Transverse colon (tissue), 4 donors: ENCODE measurements at regions of chr4 and their contacts with region 1.

Region 1: DNA sequence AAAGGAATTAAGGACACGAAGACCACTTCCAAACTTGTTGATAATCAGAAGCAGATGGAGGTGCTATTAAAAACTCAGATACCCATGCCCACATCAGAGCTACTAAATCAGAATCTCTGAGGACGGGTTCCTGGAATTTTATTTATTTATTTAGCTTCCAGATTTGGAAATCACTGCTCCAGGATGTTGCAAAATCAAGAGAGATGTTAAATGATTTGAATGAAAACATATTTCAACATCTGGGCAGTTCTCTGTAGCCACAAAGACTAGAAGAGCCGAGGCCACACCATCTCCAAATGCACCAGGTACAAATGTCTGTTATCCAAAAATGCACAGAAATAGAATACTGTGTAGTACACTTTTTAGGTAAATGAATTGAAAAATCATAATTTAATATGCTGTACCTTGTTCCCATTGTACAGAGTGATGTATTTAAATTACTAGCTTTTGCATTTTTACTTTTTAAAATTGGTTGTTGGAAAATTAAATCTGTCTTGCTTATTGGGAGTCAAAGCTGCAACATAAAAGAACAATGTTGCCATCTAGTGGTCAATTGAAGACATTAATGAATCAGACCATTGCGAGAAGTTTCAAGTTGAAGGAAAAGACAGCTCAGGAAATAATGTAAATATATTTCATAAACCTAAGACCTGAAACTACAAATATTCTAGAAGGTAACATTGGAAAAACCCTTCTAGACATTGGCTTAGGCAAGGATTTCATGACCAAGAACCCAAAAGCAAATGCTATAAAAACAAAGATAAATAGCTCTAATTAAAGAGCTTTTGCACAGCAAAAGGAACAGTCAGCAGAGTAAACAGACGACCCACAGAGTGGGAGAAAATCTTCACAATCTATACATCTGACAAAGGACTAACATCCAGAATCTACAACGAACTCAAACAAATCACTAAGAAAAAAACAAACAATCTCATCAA is 151.3 kb upstream of the TTC29 start:
- DNase-seq: no peak
- H3K4me3 ChIP-seq: no peak overlapping the region
- H3K27ac ChIP-seq: no peak overlapping the region
- H3K4me1 ChIP-seq: no peaks in the 10 kb centered on the region
- H3K27me3 ChIP-seq: peaks cover 5% of the 10 kb centered on the region
- CTCF ChIP-seq: peak; percentile 57 to 74 (median 67)
- EP300 ChIP-seq: no peak
- POLR2A ChIP-seq: no peak

Region 2: DNA sequence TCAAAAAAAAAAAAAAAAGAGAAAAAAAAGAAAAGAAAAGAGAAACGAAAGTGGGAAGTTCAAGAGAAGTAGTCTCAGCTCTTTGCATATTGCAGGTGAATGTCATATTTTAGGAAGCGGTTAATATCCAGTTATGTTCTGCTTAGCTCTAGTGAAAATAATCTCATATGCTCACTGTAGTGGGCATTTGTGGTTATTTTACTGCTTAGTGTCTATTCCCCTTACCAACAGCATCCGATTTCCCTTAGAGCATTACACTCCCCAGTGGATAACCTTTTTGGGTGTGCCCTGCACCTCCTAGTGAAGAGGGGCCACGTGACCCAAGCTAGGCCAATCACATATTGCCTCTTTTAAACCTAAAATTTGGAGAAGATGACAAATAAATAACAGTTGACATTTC is 1047.1 kb before region 1 on chr4:
- in situ Hi-C with region 1: no loop called
- intact Hi-C with region 1: no loop called
- DNase-seq: no peak
- H3K4me3 ChIP-seq: no peak overlapping the region
- H3K27ac ChIP-seq: no peak overlapping the region
- H3K4me1 ChIP-seq: no peaks in the 10 kb centered on the region
- H3K27me3 ChIP-seq: no peaks in the 10 kb centered on the region
- CTCF ChIP-seq: no peak
- EP300 ChIP-seq: no peak
- POLR2A ChIP-seq: no peak

Region 3: GRCh38 chr4:146342600-146343192 is 754.2 kb before region 1 on chr4:
- in situ Hi-C with region 1: loop called in 2 of 4 experiments (anchors 25 kb)
- intact Hi-C with region 1: no loop called
- DNase-seq: no peak
- H3K4me3 ChIP-seq: no peak overlapping the region
- H3K27ac ChIP-seq: no peak overlapping the region
- H3K4me1 ChIP-seq: no peaks in the 10 kb centered on the region
- H3K27me3 ChIP-seq: no peaks in the 10 kb centered on the region
- CTCF ChIP-seq: peak; percentile 37 to 62 (median 52)
- EP300 ChIP-seq: no peak
- POLR2A ChIP-seq: no peak

Region 4: GRCh38 chr4:147019061-147019460 is 77.9 kb before region 1 on chr4:
- in situ Hi-C with region 1: loop called in 2 of 4 experiments (anchors 5 to 10 kb)
- intact Hi-C with region 1: loop called (anchors 2 kb)
- DNase-seq: peak; percentile 59
- H3K4me3 ChIP-seq: no peak overlapping the region
- H3K27ac ChIP-seq: no peak overlapping the region
- H3K4me1 ChIP-seq: no peaks in the 10 kb centered on the region
- H3K27me3 ChIP-seq: peaks cover under 1% of the 10 kb centered on the region
- CTCF ChIP-seq: peak; percentile 50 to 64 (median 57)
- EP300 ChIP-seq: no peak
- POLR2A ChIP-seq: no peak

Region 5: DNA sequence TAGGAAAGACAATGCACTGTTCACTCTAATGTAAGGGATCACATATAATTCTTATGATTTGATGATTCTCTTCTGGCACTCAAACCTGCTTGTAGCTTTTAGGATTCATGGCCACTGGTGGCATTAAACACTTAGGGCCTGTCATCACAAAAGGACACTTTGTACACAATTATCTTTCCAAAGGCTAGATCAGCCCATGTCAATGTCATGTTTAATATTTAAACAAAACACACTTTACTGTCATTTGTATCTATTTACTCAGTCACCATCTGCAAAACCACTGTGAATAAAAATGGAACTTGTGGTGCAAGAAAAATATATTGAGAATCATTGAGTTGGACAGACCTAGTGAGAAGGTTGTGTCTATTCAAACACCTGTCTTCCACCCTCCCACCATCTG is 67.6 kb before region 1 on chr4:
- in situ Hi-C with region 1: loop called in 1 of 4 experiments (anchors 10 kb)
- intact Hi-C with region 1: no loop called
- DNase-seq: no peak
- H3K4me3 ChIP-seq: no peak overlapping the region
- H3K27ac ChIP-seq: no peak overlapping the region
- H3K4me1 ChIP-seq: no peaks in the 10 kb centered on the region
- H3K27me3 ChIP-seq: no peaks in the 10 kb centered on the region
- CTCF ChIP-seq: no peak
- EP300 ChIP-seq: no peak
- POLR2A ChIP-seq: no peak

Region 6: DNA sequence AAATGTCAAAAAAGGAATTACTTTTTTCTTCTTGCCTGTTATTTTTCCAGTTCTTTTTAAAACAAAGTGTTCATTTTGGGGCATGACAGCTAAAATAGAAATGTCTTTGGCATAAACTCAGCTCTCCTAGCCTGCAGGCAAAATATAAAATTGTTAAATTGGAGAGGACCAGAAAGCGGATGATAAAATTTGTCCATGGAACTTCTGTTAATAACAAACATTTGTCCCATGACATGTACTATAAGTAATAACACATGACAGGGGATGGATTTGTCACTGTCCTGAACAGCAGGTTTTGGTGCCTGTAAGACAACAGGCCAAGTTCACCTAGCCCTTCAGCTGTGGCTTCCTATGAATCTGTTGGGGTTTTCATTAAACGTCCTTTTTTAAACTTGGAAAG is 32.8 kb after region 1 on chr4:
- in situ Hi-C with region 1: no loop called
- intact Hi-C with region 1: loop called (anchors 1 kb)
- DNase-seq: no peak
- H3K4me3 ChIP-seq: no peak overlapping the region
- H3K27ac ChIP-seq: no peak overlapping the region
- H3K4me1 ChIP-seq: no peaks in the 10 kb centered on the region
- H3K27me3 ChIP-seq: no peaks in the 10 kb centered on the region
- CTCF ChIP-seq: no peak
- EP300 ChIP-seq: no peak
- POLR2A ChIP-seq: no peak

Region 7: DNA sequence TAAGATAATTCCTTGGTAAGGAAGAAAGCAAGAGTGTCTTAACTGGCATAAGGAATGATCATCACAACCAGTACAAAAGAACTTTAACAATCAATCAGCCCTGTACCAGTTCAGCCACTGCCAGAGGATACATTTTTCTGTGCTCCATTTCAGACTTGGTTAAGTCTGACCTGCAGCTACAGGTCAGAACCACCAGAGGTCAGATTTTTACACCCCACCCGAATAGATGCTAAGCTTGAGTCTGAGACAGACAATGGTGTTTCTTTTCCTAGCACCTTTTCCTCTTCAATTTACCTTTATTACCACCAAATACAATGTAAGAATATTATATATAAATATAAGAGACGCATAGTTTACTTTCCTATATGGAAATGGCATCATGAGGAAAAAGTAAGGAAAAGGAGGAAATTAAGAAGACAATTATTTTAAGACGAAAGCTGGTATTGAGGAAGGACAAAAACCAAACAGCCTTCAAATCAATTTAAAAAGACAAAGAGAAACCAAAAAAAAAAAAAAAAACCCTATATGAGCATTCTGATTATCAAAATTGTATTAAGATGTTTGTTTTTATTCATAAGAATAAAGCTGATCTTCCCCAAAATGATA is 64.1 kb after region 1 on chr4:
- in situ Hi-C with region 1: no loop called
- intact Hi-C with region 1: no loop called
- DNase-seq: no peak
- H3K4me3 ChIP-seq: no peak overlapping the region
- H3K27ac ChIP-seq: no peak overlapping the region
- H3K4me1 ChIP-seq: peaks cover 0 to 8% (median 0%) of the 10 kb centered on the region in 4 donors
- H3K27me3 ChIP-seq: peaks cover 15% of the 10 kb centered on the region
- CTCF ChIP-seq: peak; percentile 67 to 74 (median 73)
- EP300 ChIP-seq: no peak
- POLR2A ChIP-seq: no peak